Spleen (tissue), 13 donors: ENCODE measurements at regions of chr10 and their contacts with region 1.

Region 1: DNA sequence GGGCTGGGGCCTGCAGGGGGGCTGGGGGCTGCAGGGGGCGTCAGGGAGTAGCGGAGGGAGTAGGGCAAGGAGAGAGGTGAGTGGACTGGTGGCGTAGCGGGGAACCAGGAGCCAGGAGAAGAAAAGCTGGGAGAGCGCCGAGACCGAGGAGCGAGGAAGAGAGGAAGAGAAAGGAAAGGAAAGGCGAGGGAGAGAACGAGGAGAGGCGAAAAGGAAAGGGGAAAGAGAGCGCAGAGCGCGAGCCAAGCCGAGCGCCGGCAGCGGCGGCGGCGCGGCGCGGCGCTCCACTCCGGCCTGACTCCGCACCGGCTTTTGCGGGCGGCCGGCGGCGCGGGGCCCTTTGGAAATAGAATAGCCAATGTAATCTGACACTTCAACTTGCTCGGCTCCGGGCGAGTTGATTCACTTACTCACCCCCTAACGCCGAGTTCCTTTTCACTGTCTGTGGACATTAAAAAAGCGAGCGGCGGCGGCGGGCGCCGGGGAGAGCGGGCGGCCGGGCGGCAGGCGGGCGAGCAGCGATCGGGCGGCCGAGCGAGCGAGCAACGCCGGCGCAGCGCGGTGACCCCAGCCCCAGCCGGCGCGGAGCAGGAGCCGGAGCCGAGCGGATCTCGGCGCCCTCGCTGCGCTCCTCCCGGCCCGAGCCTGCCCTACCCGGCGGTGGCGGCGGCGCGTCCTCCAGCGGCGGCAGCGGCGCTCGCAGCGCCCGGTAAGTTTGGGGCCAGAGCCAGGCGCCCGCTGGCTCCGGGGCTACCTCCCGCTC is at the start of gene ZMIZ1:
- DNase-seq: peak; percentile 95
- H3K4me3 ChIP-seq: peak within 1 kb of the TSS; percentile 65 to 88 (median 76)
- H3K27ac ChIP-seq: peak within 1 kb of the TSS; percentile 76 to 96 (median 94)
- H3K4me1 ChIP-seq: peaks cover 18 to 69% (median 57%) of the 10 kb centered on the region in 6 donors
- H3K27me3 ChIP-seq: peaks cover 0 to 29% (median 3%) of the 10 kb centered on the region in 7 donors
- CTCF ChIP-seq: no peak
- POLR2A ChIP-seq: peak in 2 of 3 donors; percentile 64 to 65
- total RNA-seq, gene ZMIZ1: 117 to 210 (median 129) TPM

Region 2: GRCh38 chr10:78972947-78973900 is 95.5 kb before region 1 on chr10:
- intact Hi-C with region 1: loop called (anchors 5 kb)
- DNase-seq: peak; percentile 89
- H3K4me3 ChIP-seq: peak overlapping the region; percentile 30 to 76 (median 47)
- H3K27ac ChIP-seq: peak overlapping the region; percentile 65 to 94 (median 86)
- H3K4me1 ChIP-seq: peaks cover 17 to 68% (median 39%) of the 10 kb centered on the region in 6 donors
- H3K27me3 ChIP-seq: peaks cover 0 to 30% (median 0%) of the 10 kb centered on the region in 7 donors
- CTCF ChIP-seq: no peak
- POLR2A ChIP-seq: peak in 1 of 3 donors; percentile 30